Posterior vena cava (tissue), 2 donors: ENCODE measurements at regions of chr10 and their contacts with region 1.

Region 1: DNA sequence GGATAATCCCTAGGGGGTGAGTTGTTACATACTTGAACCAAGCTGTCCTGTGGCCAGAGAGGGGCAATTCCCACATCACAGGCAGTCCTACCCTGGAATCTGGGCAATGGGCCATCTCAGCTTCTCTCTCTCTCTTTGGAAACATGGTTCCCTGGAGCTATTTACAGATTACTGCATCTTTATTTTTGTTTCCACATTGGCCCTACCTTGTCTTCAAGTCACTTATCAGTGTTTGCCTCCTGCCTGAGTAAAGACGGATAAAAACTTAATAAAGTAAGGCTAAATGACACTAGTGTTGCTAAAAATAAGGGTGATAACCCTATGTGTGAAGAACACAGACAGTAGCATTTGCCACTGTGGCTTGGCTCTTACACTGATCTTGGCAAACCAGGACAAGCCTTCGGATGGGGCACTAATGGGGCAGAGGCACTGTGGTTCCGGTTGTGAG is 228.2 kb downstream of the GFRA1 start:
- DNase-seq: no peak

Region 2: GRCh38 chr10:115974816-115975430 is 69.9 kb before region 1 on chr10:
- intact Hi-C with region 1: loop called in 1 of 2 experiments (anchors 10 kb)
- DNase-seq: no peak